ENCODE measurements at regions of chr4 and their contacts with region 1.

Region 1: GRCh38 chr4:121072224-121073003 is at the start of gene NDNF:
- DNase-seq: peak; percentile 78
- H3K4me3 ChIP-seq: peak within 1 kb of the TSS; percentile 48 to 69 (median 63)
- H3K27ac ChIP-seq: peak within 1 kb of the TSS; percentile 56 to 76 (median 68)
- H3K4me1 ChIP-seq: peaks cover 0 to 21% (median 16%) of the 10 kb centered on the region in 4 donors
- H3K27me3 ChIP-seq: no peaks in the 10 kb centered on the region
- CTCF ChIP-seq: no peak
- EP300 ChIP-seq: no peak
- POLR2A ChIP-seq: no peak
- total RNA-seq, gene NDNF: 3.8 to 11.1 (median 7.4) TPM

Region 2: GRCh38 chr4:120922381-120923206 is 149.8 kb before region 1 on chr4 and contains the start of gene PRDM5:
- intact Hi-C with region 1: loop called (anchors 5 kb)
- DNase-seq: peak; percentile 76
- H3K4me3 ChIP-seq: peak within 1 kb of the TSS; percentile 56 to 80 (median 76)
- H3K27ac ChIP-seq: peak within 1 kb of the TSS; percentile 92 to 93 (median 93)
- H3K4me1 ChIP-seq: peaks cover 0 to 36% (median 23%) of the 10 kb centered on the region in 4 donors
- H3K27me3 ChIP-seq: no peaks in the 10 kb centered on the region
- CTCF ChIP-seq: peak in 2 of 4 experiments; percentile 13 to 21
- EP300 ChIP-seq: no peak
- POLR2A ChIP-seq: no peak
- total RNA-seq, gene PRDM5: 15.0 to 25.0 (median 22.4) TPM

Region 3: DNA sequence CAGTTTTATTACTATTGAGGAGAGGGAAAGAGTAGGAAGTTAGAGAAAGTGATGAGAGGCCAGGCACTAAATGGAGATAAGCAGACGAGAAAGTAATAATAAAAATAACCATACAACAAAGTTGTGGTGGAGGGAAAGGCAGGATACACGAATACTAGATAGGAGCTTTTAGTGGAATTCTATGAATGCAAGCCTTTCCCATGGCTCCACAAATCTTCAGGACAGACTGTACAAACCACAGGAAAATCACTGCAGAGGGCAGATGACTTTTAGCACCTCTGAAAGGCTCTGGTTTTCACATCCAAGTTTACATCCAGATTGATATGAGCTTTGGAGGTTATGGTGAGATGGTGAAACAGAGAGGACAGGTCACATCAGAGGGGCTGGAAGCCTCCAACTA is 50.2 kb after region 1 on chr4:
- intact Hi-C with region 1: no loop called
- DNase-seq: no peak
- H3K4me3 ChIP-seq: no peak overlapping the region
- H3K27ac ChIP-seq: no peak overlapping the region
- H3K4me1 ChIP-seq: no peaks in the 10 kb centered on the region
- H3K27me3 ChIP-seq: no peaks in the 10 kb centered on the region
- CTCF ChIP-seq: no peak
- EP300 ChIP-seq: no peak
- POLR2A ChIP-seq: no peak